Caco-2 (cell line): ENCODE measurements at regions of chr11 and their contacts with region 1.

Region 1: DNA sequence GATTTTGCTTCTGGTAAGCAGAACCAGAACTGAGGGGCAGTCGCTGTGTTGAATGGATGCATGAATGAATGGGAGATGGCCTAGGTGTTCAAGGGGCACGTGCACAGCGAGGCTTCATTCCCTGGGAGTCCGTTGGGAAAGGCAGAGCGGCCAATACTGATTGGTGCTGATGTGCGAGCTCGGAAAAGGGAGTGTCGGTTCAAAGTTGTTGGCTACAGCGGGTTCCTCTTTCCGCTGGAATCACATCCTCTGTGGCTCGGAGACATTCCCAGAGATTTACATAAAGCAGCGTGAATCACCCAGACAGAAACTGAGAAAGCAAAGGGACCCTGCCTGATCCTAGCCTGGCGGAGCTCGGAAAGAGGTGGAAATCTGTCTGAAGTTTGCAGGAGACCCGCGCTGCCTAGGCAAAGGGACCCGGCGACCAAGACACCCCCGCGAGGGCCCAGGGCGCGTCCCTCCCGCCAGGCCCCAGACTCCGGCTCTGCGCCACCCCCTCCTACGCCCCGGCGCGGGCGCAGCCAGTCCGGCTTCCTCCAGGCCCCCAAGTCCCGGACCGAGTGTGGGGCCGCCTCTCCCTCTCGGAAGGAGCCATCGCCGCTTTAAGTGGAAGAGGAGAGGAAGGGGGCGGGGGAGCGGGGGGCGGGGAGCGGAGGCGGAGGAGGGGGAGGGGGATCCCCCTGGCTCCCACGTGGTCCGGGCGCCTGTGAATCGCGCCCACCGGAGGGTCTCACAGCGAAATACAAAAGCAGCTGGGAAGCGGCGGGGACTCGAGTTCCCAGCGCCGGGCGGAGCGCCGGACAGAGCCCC is at the start of gene FJX1:
- DNase-seq: peak; percentile 69 to 71
- H3K4me3 ChIP-seq: peak within 1 kb of the TSS; percentile 61
- H3K4me3 Mint-ChIP-seq: peak within 1 kb of the TSS; percentile 81
- H3K27ac Mint-ChIP-seq: peak within 1 kb of the TSS; percentile 76
- H3K4me1 ChIP-seq: peaks cover 26% of the 10 kb centered on the region
- H3K4me1 Mint-ChIP-seq: peaks cover 20% of the 10 kb centered on the region
- H3K27me3 ChIP-seq: no peaks in the 10 kb centered on the region
- H3K27me3 Mint-ChIP-seq: peaks cover 2% of the 10 kb centered on the region
- CTCF ChIP-seq: no peak
- total RNA-seq, gene FJX1: 12.0 and 14.4 TPM in 2 replicates

Region 2: DNA sequence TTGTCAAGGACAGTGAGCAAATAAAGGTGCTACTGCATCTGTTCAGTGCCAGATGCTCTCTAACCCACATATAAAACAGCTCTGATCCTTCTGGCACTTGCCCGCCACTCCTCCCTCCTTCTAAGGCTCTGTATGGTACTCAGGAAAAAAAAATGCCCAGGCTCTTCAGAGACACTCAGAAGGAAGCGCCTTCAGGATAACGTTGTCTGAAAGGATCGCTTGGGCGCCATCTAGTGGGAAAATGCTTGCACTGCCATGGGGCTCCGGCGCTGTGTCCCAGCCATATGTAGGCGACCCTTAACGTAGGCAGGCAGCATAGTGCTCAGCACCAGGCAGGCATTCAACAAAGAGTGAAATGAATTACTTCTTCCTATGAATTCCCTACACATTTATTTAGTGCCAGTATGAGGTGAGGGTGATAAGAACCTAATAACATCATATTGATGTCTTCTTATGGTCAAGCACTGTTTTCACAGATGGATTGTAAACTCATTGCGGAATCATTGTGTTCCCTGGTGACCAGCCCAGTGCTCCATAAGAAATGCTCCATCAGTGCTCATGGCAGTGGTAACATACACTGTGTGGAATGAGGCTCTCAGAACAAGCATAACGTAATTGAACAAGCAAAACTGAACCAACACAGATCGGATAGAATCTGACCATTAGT is 132.1 kb before region 1 on chr11:
- CTCF ChIA-PET with region 1: no interaction called
- POLR2A ChIA-PET with region 1: no interaction called
- intact Hi-C with region 1: loop called (anchors 5 kb)
- DNase-seq: peak; percentile 80 to 86
- H3K4me3 ChIP-seq: no peak overlapping the region
- H3K4me3 Mint-ChIP-seq: no peak overlapping the region
- H3K27ac Mint-ChIP-seq: no peak overlapping the region
- H3K4me1 ChIP-seq: no peaks in the 10 kb centered on the region
- H3K4me1 Mint-ChIP-seq: no peaks in the 10 kb centered on the region
- H3K27me3 ChIP-seq: no peaks in the 10 kb centered on the region
- H3K27me3 Mint-ChIP-seq: no peaks in the 10 kb centered on the region
- CTCF ChIP-seq: peak; percentile 87 to 96

Region 3: DNA sequence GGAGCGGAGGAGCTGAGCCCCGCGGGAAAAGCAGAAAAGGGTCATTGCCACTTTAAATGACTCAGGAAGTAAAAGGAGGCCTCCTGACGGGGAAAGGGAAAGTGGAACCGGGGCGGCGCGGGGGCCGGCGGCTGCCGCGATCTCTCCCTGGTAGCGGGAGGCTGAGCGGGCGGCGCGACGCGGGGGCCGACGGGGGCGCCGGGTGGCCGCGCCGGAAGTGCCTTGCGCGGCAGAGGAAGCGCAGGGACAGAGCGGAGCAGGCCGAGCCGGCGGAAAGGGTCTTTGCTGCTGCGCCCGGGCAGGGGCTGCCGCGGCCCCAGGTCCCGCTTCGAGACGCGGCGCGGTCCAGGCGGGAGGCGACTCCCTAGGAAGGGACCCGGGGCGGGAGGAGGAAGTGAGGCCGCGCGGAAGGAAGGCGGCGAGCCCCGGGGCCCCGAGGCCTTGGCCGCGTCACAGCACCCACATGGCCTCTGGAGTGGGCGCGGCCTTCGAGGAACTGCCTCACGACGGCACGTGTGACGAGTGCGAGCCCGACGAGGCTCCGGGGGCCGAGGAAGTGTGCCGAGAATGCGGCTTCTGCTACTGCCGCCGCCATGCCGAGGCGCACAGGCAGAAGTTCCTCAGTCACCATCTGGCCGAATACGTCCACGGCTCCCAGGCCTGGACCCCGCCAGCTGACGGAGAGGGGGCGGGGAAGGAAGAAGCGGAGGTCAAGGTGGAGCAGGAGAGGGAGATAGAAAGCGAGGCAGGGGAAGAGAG is 44.9 kb after region 1 on chr11 and contains the start of gene TRIM44:
- CTCF ChIA-PET with region 1: no interaction called
- POLR2A ChIA-PET with region 1: no interaction called
- intact Hi-C with region 1: loop called (anchors 1 kb)
- DNase-seq: peak; percentile 90 to 91
- H3K4me3 ChIP-seq: peak within 1 kb of the TSS; percentile 76
- H3K4me3 Mint-ChIP-seq: peak within 1 kb of the TSS; percentile 93
- H3K27ac Mint-ChIP-seq: peak within 1 kb of the TSS; percentile 93
- H3K4me1 ChIP-seq: peaks cover 9% of the 10 kb centered on the region; the same call in 1 of the 2 replicates
- H3K4me1 Mint-ChIP-seq: peaks cover 12% of the 10 kb centered on the region
- H3K27me3 ChIP-seq: no peaks in the 10 kb centered on the region
- H3K27me3 Mint-ChIP-seq: no peaks in the 10 kb centered on the region
- CTCF ChIP-seq: no peak
- total RNA-seq, gene TRIM44: 74.6 and 81.4 TPM in 2 replicates

Region 4: DNA sequence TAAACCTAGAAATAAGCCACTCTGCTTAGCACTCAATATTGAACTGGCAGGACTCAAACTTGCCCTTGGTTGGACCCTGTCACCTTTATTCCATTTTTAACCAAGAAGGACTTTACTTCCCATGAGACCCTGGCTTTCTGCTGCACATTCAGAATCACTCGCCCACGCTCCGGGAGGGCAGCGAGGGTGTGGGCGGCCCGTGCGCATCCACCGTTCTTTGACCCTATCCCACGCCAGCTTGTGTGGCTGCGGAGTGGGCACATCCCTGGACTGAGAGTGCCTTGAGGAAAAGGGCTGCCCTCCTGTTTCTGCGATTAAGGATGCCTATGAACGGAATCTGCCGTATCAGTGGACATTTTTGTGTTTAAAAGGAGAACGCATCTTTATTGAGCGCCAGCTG is 84.2 kb after region 1 on chr11:
- CTCF ChIA-PET with region 1: no interaction called
- POLR2A ChIA-PET with region 1: no interaction called
- intact Hi-C with region 1: no loop called
- DNase-seq: no peak
- H3K4me3 ChIP-seq: no peak overlapping the region
- H3K4me3 Mint-ChIP-seq: no peak overlapping the region
- H3K27ac Mint-ChIP-seq: no peak overlapping the region
- H3K4me1 ChIP-seq: no peaks in the 10 kb centered on the region
- H3K4me1 Mint-ChIP-seq: no peaks in the 10 kb centered on the region
- H3K27me3 ChIP-seq: no peaks in the 10 kb centered on the region
- H3K27me3 Mint-ChIP-seq: no peaks in the 10 kb centered on the region
- CTCF ChIP-seq: no peak

Region 5: GRCh38 chr11:35714882-35715627 is 97.2 kb after region 1 on chr11:
- CTCF ChIA-PET with region 1: no interaction called
- POLR2A ChIA-PET with region 1: no interaction called
- intact Hi-C with region 1: loop called (anchors 5 kb)
- DNase-seq: no peak
- H3K4me3 ChIP-seq: no peak overlapping the region
- H3K4me3 Mint-ChIP-seq: no peak overlapping the region
- H3K27ac Mint-ChIP-seq: no peak overlapping the region
- H3K4me1 ChIP-seq: no peaks in the 10 kb centered on the region
- H3K4me1 Mint-ChIP-seq: no peaks in the 10 kb centered on the region
- H3K27me3 ChIP-seq: no peaks in the 10 kb centered on the region
- H3K27me3 Mint-ChIP-seq: no peaks in the 10 kb centered on the region
- CTCF ChIP-seq: no peak

Region 6: GRCh38 chr11:36041988-36042611 is 424.2 kb after region 1 on chr11:
- CTCF ChIA-PET with region 1: no interaction called
- POLR2A ChIA-PET with region 1: no interaction called
- intact Hi-C with region 1: loop called (anchors 5 kb)
- DNase-seq: peak in 1 of 2 experiments; percentile 32
- H3K4me3 ChIP-seq: no peak overlapping the region
- H3K4me3 Mint-ChIP-seq: no peak overlapping the region
- H3K27ac Mint-ChIP-seq: no peak overlapping the region
- H3K4me1 ChIP-seq: no peaks in the 10 kb centered on the region
- H3K4me1 Mint-ChIP-seq: no peaks in the 10 kb centered on the region
- H3K27me3 ChIP-seq: no peaks in the 10 kb centered on the region
- H3K27me3 Mint-ChIP-seq: no peaks in the 10 kb centered on the region
- CTCF ChIP-seq: peak; percentile 49 to 52

Region 7: DNA sequence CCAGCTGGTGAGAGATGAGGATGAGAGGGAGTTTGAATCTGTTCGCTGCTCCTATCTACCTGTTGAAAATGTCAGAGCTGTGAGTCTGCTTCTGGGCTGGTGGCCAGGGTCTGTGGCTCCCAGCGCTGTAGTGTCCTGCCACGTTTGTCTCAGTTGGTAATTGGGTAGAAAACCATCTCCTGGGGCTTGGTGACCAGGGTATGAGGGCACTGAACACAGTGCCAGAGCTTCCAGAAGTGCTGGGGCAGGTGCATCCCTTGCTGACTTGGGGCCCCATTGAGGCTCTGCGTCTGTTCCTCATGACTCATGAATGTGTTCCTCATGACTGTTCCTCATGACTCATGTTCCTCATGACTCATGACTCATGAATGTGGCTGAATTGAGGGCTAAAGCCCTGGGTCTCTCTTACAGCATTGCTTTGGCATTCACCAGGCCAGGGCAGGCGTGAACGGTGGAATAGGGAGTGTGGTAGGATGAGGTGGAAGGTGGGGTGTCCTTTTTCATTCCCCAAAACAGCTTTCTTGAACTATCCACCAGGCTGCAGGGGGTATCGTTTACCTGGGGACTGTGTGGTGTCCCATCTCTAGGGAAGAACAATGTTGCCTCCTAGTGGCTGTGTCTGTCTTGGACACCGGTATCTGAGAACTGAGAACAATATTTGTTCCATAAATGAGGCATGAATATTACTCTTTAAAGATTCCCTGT is 531.8 kb after region 1 on chr11:
- CTCF ChIA-PET with region 1: no interaction called
- POLR2A ChIA-PET with region 1: no interaction called
- intact Hi-C with region 1: loop called (anchors 5 kb)
- DNase-seq: peak; percentile 79 to 87
- H3K4me3 ChIP-seq: no peak overlapping the region
- H3K4me3 Mint-ChIP-seq: peak overlapping the region; percentile 2
- H3K27ac Mint-ChIP-seq: peak overlapping the region; percentile 89
- H3K4me1 ChIP-seq: peaks cover 30% of the 10 kb centered on the region
- H3K4me1 Mint-ChIP-seq: peaks cover 15% of the 10 kb centered on the region
- H3K27me3 ChIP-seq: no peaks in the 10 kb centered on the region
- H3K27me3 Mint-ChIP-seq: no peaks in the 10 kb centered on the region
- CTCF ChIP-seq: peak; percentile 36 to 58

Region 8: DNA sequence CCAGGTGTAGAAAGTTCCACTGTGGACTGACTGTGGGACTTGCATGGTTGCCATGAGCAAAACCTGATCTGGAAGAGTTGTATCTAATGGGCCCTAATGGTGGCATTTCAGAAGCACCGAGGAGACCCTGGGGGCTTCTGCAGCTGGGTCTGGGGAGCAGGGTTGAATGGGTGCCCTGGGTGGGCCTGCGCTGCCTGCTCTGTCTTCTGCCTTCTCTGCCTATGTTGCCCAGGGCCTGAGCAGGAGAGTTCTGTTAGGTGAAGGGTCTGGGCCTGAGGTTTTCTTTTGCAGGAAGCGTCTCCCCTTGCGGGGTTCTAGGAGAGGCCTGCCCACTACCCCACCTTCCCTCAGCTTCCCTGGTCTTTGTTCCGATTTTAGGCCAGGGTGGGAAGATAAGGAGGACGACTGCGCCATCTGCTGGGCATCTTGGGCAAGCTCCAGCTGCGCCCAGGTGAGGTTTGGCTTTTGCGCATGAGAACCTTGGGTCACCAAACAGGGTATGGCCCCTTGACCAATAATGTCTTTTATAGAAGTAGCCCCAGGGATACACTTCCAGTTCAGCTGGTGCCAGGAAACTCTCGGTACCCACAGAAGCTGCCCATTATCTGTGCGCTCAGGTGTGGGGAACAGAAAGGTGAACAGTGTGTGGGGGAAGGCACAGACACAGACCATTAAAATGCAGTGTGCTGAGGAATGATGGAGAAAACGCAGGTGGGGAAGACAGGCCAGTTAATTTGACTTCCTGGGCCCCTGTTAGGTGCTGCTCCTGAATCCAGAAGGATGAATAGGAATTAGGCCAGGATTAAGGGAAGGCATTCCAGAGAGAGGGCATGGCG is 648.1 kb after region 1 on chr11:
- CTCF ChIA-PET with region 1: interaction called, 6 read pairs
- POLR2A ChIA-PET with region 1: no interaction called
- intact Hi-C with region 1: loop called (anchors 1 kb)
- DNase-seq: peak; percentile 54 to 75
- H3K4me3 ChIP-seq: no peak overlapping the region
- H3K4me3 Mint-ChIP-seq: no peak overlapping the region
- H3K27ac Mint-ChIP-seq: no peak overlapping the region
- H3K4me1 ChIP-seq: no peaks in the 10 kb centered on the region
- H3K4me1 Mint-ChIP-seq: peaks cover 6% of the 10 kb centered on the region
- H3K27me3 ChIP-seq: no peaks in the 10 kb centered on the region
- H3K27me3 Mint-ChIP-seq: no peaks in the 10 kb centered on the region
- CTCF ChIP-seq: peak; percentile 91 to 92